PC-9 (cell line): ENCODE measurements at regions of chr4 and their contacts with region 1.

Region 1: DNA sequence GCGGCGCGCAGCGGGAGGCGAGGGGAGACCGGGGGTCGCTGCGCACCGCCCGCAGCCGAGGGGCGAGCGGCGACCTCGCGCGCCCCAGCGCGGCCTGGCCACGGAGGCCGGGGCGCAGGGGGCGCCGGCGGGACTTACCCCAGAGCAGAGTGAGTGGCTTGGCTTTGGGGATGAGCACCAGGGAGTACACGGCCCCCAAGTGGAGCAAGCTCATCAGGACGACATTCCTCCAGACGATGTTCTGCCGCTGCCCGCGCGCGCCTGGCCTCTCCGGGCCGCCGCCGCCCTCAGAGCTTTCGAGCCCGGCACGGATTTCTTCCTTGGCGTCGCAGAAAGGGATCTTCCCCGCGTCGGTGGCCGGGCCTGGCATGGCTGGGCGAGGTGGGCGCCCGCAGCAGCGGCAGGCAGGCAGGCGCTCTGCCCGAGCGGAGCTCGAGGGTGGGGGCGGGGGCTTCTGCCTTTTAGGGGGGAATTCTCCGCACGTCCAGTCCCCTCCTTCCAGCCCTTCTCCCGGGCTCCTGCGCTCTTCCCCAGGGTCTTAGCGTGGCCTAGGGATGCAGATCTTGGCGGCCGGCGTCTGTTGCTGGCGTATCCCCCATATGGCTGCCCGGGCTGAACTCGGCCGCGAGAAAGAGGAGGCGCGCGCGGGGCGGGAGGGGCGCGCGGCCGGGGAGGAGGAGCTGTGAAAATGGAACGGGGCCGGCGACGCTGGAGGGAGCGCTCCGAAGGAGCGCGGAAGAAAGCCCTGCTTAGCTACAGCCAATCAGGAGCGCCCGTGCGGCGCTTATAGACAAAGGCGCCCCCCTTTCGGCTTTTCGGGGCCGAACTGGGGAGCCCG is at the start of gene SCD5:
- DNase-seq: peak; percentile 55 to 73
- H3K4me3 ChIP-seq: peak within 1 kb of the TSS; percentile 66
- H3K27ac ChIP-seq: no peak within 1 kb of the TSS
- H3K4me1 ChIP-seq: peaks cover 8% of the 10 kb centered on the region
- H3K27me3 ChIP-seq: no peaks in the 10 kb centered on the region
- CTCF ChIP-seq: no peak
- total RNA-seq, gene SCD5: 34.3 and 41.1 TPM in 2 replicates

Region 2: DNA sequence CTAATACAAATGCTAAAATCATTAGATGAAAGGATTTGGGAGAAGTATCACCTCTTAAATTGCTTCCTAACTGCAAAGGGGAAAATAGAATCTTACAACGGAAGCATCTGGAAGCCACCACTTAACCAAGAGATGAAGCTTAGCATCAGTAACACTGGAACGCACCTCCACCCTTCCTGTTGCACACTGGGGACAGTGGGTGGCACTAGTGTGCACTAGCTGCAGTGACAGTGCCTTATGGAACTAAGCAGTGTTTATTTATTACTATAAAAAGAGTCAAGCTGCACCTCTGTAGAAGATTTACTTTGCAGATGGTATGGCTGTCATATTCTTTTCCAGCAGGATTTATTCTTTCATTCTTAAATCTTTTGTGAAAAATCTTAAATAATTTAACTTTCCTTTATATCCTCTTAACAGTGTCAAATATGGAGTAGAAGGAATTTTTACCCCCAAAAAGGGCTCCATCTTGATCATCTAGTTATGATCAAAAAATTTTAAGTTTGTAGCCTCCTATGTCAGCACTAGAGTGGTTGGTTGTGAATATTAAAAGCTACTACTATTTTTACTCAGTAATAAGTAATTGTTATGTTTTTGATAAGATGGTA is 76.5 kb before region 1 on chr4:
- CTCF ChIA-PET with region 1: no interaction called
- POLR2A ChIA-PET with region 1: no interaction called
- intact Hi-C with region 1: loop called (anchors 2 kb)
- DNase-seq: peak in 1 of 2 experiments; percentile 18
- H3K4me3 ChIP-seq: no peak overlapping the region
- H3K27ac ChIP-seq: no peak overlapping the region
- H3K4me1 ChIP-seq: no peaks in the 10 kb centered on the region
- H3K27me3 ChIP-seq: no peaks in the 10 kb centered on the region
- CTCF ChIP-seq: peak; percentile 57

Region 3: GRCh38 chr4:82745173-82745842 is 53.1 kb before region 1 on chr4:
- CTCF ChIA-PET with region 1: no interaction called
- POLR2A ChIA-PET with region 1: interaction called, 3 read pairs
- intact Hi-C with region 1: loop called (anchors 2 kb)
- DNase-seq: peak; percentile 62 to 68
- H3K4me3 ChIP-seq: no peak overlapping the region
- H3K27ac ChIP-seq: peak overlapping the region; percentile 92
- H3K4me1 ChIP-seq: peaks cover 25% of the 10 kb centered on the region
- H3K27me3 ChIP-seq: no peaks in the 10 kb centered on the region
- CTCF ChIP-seq: no peak

Region 4: GRCh38 chr4:82785611-82786400 is 12.6 kb before region 1 on chr4:
- CTCF ChIA-PET with region 1: interaction called, 3 read pairs
- POLR2A ChIA-PET with region 1: interaction called, 19 read pairs
- intact Hi-C with region 1: loop called (anchors 2 kb)
- DNase-seq: peak; percentile 53 to 90
- H3K4me3 ChIP-seq: peak overlapping the region; percentile 45; the same call in 1 of the 2 replicates
- H3K27ac ChIP-seq: peak overlapping the region; percentile 89
- H3K4me1 ChIP-seq: peaks cover 50% of the 10 kb centered on the region
- H3K27me3 ChIP-seq: no peaks in the 10 kb centered on the region
- CTCF ChIP-seq: no peak